ENCODE measurements at regions of chr15 and their contacts with region 1.

Region 1: DNA sequence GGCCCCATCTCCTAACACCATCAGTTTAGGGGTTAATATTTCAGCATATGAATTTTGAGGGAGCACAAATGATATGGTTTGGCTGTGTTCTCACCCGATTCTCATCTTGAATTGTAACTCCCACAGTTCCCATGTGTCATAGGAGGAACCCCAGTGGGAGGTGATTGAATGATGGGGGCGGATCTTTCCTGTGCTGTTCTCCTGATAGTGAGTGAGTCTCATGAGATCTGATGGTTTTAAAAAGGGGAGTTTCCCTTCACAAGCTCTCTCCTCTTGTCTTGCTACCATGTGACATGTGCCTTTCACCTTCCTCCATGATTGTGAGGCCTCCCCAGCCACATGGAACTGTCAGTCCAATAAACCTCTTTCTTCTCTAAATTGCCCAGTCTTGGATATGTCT is 73.8 kb upstream of the TJP1 start:
- DNase-seq: no peak

Region 2: GRCh38 chr15:29774900-29775299 is 121.2 kb before region 1 on chr15:
- intact Hi-C with region 1: no loop called
- DNase-seq: no peak

Region 3: DNA sequence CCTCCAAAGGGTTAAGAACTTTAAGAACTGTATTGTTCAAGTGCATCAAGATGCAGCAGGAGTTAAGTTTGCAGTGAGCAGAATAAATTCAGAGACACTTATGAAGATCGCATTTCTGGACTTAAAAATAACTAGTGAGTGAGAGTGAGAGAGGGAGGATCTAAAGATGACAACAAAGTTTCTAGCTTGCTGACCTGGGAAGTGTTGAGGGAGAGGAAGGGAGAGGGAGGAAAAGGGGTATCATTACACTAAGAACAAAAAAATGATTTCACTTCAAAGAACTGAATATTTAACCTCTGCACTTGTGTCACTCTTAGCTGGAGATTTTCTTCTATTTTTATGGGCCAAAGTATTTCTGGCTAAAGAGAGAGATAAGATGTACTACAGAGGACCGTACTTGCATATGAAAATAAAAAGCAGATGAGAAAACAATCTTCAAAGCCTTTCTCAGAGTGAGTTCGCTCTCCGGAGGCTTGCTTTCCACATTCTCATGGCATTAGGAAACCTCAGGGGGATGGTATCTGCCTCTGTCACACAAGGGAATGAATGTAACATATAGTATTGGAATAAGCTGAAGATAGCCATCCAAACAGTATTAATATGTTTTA is 17.6 kb after region 1 on chr15:
- intact Hi-C with region 1: loop called in 1 of 2 experiments (anchors 1 kb)
- DNase-seq: no peak

Region 4: DNA sequence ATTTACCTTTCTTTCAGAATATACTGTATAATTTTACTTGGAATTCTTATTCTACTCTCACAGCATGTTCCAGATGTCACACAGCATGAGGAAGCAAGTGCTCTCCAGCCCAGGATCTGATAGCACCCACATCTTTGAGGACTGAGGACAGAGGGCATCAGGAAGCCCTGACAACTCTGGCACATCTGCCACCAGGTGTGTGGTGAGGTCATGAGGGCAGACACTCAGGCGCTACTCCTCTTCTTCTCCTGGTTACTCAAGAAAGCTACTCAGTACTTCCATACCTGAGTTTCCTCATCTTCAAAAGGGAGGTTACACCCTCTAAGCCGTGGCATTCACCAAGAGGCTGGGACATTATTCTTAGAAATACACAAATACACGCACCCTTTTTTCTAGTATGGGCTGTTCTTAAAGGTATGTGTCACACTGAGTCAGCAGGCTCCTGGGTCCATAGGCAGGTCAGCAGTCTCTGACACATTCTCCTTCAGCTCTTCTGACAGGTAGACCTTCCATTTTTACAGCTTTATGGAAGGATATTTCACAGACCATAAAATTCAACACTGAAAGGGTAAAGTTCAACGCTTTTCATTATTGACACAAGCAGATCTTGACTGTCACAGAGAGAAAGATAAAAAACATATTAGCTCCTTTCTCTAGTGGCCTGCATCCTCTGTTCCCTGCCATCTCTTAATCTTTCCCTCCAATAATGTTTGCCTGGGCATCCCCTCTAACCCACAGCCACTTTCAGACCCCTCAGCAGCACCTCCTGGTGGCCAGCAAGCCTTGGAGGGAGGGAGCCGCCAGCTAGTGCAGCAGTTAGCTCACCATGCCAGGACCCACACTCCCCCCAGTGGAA is 29.4 kb after region 1 on chr15:
- intact Hi-C with region 1: no loop called
- DNase-seq: peak; percentile 89